K562 (cell line): ENCODE measurements at regions of chr5 and their contacts with region 1.

Region 1: DNA sequence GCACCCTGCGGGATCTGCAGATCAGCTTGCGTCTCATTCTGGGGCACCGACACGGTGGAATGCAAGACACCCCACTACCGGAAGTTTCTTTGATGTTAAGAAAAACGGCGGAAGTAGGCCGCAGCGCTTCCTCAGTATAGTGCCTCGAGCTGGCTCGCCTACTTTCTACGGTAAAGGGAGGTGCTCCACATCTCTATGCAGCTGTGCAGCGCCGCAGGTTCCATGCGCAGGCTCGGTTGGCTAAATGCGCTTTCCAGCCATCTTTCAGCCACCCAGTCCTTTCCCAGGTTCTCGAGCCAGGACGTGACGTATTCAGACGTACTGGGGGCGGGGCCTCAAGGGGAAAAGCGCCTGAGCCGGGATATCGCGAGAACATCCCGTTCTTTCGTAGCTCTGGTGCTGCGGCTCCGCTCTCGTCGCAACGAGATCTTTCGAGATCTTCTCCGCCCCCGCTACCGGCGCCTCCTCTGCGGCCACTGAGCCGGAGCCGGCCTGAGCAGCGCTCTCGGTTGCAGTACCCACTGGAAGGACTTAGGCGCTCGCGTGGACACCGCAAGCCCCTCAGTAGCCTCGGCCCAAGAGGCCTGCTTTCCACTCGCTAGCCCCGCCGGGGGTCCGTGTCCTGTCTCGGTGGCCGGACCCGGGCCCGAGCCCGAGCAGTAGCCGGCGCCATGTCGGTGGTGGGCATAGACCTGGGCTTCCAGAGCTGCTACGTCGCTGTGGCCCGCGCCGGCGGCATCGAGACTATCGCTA is at the start of gene HSPA4:
- DNase-seq: peak; percentile 93 to 99 (median 95)
- ATAC-seq: peak; percentile 92
- H3K4me3 ChIP-seq: peak within 1 kb of the TSS; percentile 81
- H3K27ac ChIP-seq: peak within 1 kb of the TSS; percentile 96
- H3K4me1 ChIP-seq: peaks cover 17 to 32% of the 10 kb centered on the region in 2 experiments; a peak in 4 of 5 replicates
- H3K27me3 ChIP-seq: no peaks in the 10 kb centered on the region
- CTCF ChIP-seq: peak in 1 of 3 experiments; percentile 21; a peak in 2 of 6 replicates
- EP300 ChIP-seq: no peak; the same call in 1 of the 2 replicates
- POLR2A ChIP-seq: peak; percentile 98
- RAD21 ChIP-seq: peak in 1 of 2 experiments; percentile 5; a peak in 1 of 4 replicates
- polyA plus RNA-seq, gene HSPA4: 90.3 to 93.0 TPM

Region 2: DNA sequence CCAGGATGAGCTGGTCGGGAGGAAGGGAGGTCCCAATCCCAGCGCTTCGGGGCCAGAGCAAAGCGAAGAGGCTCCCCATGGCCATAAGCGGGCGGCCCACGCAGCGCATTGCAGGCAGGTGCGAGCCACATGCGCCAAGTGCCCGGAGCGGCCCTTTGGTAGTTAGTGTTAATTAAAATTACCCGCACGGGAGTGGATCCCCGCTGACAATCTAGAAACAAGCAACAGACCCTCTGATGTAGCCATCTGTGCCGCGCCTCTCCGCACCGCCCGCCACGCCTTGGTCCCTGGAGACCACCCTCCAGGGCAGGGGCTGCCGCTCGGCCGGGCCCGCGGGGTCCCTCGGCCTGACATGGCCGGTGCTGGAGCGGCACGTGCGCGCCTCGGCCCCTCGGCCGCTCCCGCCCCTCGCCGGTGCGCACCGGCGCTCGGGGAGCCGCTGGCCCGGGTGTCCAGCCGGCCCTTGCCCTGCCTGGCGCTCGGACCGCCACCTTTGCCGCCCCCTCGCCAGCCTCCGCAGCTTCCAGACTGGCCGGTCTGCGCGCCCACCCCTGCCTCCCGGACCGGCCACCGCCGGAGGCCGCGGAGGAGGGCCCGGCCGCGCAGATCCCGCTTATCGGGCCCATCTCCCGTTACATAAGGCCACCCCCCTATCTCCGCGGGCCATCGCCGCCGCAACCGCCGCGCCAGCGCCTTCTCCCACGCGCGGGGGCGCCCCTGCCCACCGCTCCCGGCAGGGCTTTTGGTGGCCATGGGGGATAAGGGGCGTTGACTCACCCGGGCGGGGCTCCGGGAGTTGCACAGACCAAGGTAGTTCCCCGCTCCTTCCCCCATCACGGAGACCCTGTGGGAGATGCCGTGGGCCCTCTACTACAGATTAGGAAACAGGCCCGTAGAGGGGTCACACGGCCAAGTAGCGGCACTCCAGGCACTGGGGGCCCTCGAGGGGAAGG is 395.7 kb before region 1 on chr5:
- CTCF ChIA-PET with region 1: no interaction called
- POLR2A ChIA-PET with region 1: no interaction called
- in situ Hi-C with region 1: no loop called
- intact Hi-C with region 1: no loop called
- DNase-seq: no peak
- ATAC-seq: no peak
- H3K4me3 ChIP-seq: no peak overlapping the region
- H3K27ac ChIP-seq: no peak overlapping the region
- H3K4me1 ChIP-seq: peaks cover 24 to 32% of the 10 kb centered on the region in 2 experiments
- H3K27me3 ChIP-seq: no peaks in the 10 kb centered on the region
- CTCF ChIP-seq: no peak
- EP300 ChIP-seq: no peak
- POLR2A ChIP-seq: no peak
- RAD21 ChIP-seq: no peak

Region 3: GRCh38 chr5:132947671-132948070 is 104.1 kb before region 1 on chr5:
- CTCF ChIA-PET with region 1: no interaction called
- POLR2A ChIA-PET with region 1: no interaction called
- in situ Hi-C with region 1: no loop called
- intact Hi-C with region 1: loop called (anchors 5 kb)
- DNase-seq: no peak
- ATAC-seq: no peak
- H3K4me3 ChIP-seq: no peak overlapping the region
- H3K27ac ChIP-seq: no peak overlapping the region
- H3K4me1 ChIP-seq: peaks cover 0 to 5% of the 10 kb centered on the region in 2 experiments; a peak in 3 of 5 replicates
- H3K27me3 ChIP-seq: no peaks in the 10 kb centered on the region
- CTCF ChIP-seq: no peak
- EP300 ChIP-seq: no peak
- POLR2A ChIP-seq: no peak
- RAD21 ChIP-seq: no peak

Region 4: GRCh38 chr5:132963175-132964104 is 88.3 kb before region 1 on chr5 and contains the start of gene AFF4:
- CTCF ChIA-PET with region 1: no interaction called
- POLR2A ChIA-PET with region 1: interaction called, 19 read pairs
- in situ Hi-C with region 1: no loop called
- intact Hi-C with region 1: loop called (anchors 2 kb)
- DNase-seq: peak; percentile 94 to 97 (median 96)
- ATAC-seq: peak; percentile 96
- H3K4me3 ChIP-seq: peak within 1 kb of the TSS; percentile 95
- H3K27ac ChIP-seq: peak within 1 kb of the TSS; percentile 92
- H3K4me1 ChIP-seq: peaks cover 8 to 19% of the 10 kb centered on the region in 2 experiments; a peak in 4 of 5 replicates
- H3K27me3 ChIP-seq: no peaks in the 10 kb centered on the region
- CTCF ChIP-seq: no peak
- EP300 ChIP-seq: peak; percentile 28; the same call in 1 of the 2 replicates
- POLR2A ChIP-seq: peak; percentile 85
- RAD21 ChIP-seq: no peak; a peak in 1 of 4 replicates
- polyA plus RNA-seq, gene AFF4: 1.7 to 3.6 TPM

Region 5: DNA sequence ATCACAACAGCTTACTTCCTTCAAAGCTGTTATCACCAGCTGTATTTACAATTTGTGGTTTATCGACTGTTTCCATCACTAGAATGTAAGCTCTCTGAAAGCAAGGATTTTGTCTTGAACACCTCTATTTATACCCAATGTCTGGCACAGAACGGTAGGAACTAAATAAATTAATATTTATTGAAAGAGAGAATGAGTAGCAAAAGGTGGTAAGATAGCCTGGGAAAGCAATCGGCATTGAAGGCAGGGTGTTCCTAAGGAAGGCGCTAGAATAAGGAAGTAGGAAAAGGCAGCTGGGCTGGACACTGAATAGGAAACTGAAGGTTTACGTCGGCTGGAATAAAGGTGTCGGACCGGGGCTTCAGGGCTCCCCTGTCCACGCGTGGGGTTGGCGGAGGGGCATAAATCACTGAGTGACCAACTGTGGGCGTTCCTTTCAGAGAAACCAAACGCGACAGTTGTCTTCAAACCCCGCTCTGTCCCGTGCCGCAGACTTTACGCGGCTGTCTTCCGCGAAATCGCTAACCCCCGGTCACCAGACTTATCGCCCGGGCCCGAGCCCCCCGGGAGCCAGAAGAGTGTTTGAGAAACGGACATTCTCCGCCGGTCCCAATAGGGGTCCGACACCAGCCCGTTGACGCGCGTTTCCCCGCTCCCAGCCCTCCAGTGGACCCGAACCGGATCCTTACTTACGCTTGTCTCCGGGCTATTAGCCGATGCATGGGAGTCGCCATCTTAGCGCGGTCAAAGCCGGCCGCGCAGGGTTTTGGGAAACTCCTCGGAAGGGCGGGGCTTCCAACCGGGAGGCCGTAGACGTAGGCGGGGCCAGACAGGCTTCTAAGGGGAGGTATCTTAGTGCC is 25.7 kb before region 1 on chr5 and contains the start of gene ZCCHC10:
- CTCF ChIA-PET with region 1: no interaction called
- POLR2A ChIA-PET with region 1: interaction called, 7 read pairs
- in situ Hi-C with region 1: no loop called
- intact Hi-C with region 1: loop called (anchors 1 kb)
- DNase-seq: peak; percentile 93 to 97 (median 94)
- ATAC-seq: peak; percentile 99
- H3K4me3 ChIP-seq: peak within 1 kb of the TSS; percentile 87
- H3K27ac ChIP-seq: peak within 1 kb of the TSS; percentile 90
- H3K4me1 ChIP-seq: peaks cover 5 to 9% of the 10 kb centered on the region in 2 experiments; a peak in 4 of 5 replicates
- H3K27me3 ChIP-seq: no peaks in the 10 kb centered on the region
- CTCF ChIP-seq: no peak
- EP300 ChIP-seq: 0 out of 2 replicates have a peak, but pooled peaks have one; percentile 3
- POLR2A ChIP-seq: peak; percentile 97
- RAD21 ChIP-seq: no peak; a peak in 1 of 4 replicates
- polyA plus RNA-seq, gene ZCCHC10: 144 to 146 TPM

Region 6: GRCh38 chr5:133035224-133035623 is 16.5 kb before region 1 on chr5:
- CTCF ChIA-PET with region 1: no interaction called
- POLR2A ChIA-PET with region 1: interaction called, 24 read pairs
- in situ Hi-C with region 1: no loop called
- intact Hi-C with region 1: no loop called
- DNase-seq: no peak
- ATAC-seq: no peak
- H3K4me3 ChIP-seq: no peak overlapping the region
- H3K27ac ChIP-seq: no peak overlapping the region
- H3K4me1 ChIP-seq: peaks cover 0 to 9% of the 10 kb centered on the region in 2 experiments; a peak in 2 of 5 replicates
- H3K27me3 ChIP-seq: no peaks in the 10 kb centered on the region
- CTCF ChIP-seq: no peak
- EP300 ChIP-seq: no peak
- POLR2A ChIP-seq: no peak
- RAD21 ChIP-seq: no peak

Region 7: GRCh38 chr5:133225671-133226152 is 174.0 kb after region 1 on chr5:
- CTCF ChIA-PET with region 1: no interaction called
- POLR2A ChIA-PET with region 1: no interaction called
- in situ Hi-C with region 1: no loop called
- intact Hi-C with region 1: no loop called
- DNase-seq: no peak
- ATAC-seq: no peak
- H3K4me3 ChIP-seq: no peak overlapping the region
- H3K27ac ChIP-seq: no peak overlapping the region
- H3K4me1 ChIP-seq: 0 out of 5 replicates have a peak, but pooled peaks cover 0 to 2% of the 10 kb centered on the region in 2 experiments
- H3K27me3 ChIP-seq: peaks cover 7 to 40% of the 10 kb centered on the region in 2 experiments; a peak in 4 of 5 replicates
- CTCF ChIP-seq: no peak
- EP300 ChIP-seq: no peak
- POLR2A ChIP-seq: no peak
- RAD21 ChIP-seq: no peak